Naive thymus-derived CD4-positive, alpha-beta T cell (primary cell): ENCODE measurements at regions of chr11 and their contacts with region 1.

Region 1: GRCh38 chr11:17384002-17384511 is 4.4 kb downstream of the KCNJ11 start:
- DNase-seq: peak; percentile 53 to 79 (median 69)
- ATAC-seq: peak; percentile 67
- H3K4me3 ChIP-seq: no peak overlapping the region
- H3K4me3 Mint-ChIP-seq: no peak overlapping the region
- H3K27ac ChIP-seq: no peak overlapping the region
- H3K27ac Mint-ChIP-seq: no peak overlapping the region
- H3K4me1 ChIP-seq: no peaks in the 10 kb centered on the region
- H3K4me1 Mint-ChIP-seq: peaks cover 0 to 7% (median 0%) of the 10 kb centered on the region in 7 donors
- H3K27me3 ChIP-seq: no peaks in the 10 kb centered on the region
- H3K27me3 Mint-ChIP-seq: peaks cover 0 to 5% (median 0%) of the 10 kb centered on the region in 5 donors

Region 2: DNA sequence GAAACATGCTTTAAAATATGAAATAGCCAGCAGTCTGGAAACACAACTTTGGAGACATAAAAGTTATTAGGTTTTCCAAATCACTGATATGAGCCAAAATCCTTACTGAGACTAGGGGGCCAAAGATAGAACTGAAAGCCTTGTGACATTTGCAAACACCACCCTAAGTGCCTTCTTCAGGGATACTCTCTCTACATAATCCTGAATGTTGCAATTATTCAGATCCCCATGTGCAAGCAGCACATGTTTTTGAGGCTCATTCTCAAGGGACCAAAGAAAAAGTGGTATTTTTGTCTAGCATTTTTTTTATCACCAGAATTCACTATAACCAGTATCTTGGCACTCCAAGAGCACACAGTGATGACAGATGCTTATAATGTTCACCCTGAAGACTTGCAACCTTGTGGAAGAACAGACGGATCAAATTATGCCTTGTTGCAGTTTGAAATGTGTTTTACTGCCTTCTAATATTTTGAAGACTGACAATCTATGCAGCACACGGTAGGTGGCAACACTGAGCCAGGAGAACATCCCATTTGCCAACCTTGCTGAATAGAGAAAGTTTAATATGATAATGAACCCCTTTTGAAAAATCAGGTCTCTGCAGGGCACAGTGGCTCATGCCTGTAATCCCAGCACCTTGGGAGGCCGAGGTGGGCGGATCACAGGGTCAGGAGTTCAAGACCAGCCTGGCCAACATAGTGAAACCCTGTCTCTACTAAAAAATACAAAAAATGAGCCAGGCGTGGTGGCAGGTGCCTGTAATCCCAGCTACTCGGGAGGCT is 448.3 kb before region 1 on chr11:
- CTCF ChIA-PET with region 1: no interaction called
- POLR2A ChIA-PET with region 1: no interaction called
- intact Hi-C with region 1: loop called in 1 of 2 experiments (anchors 10 kb)
- DNase-seq: peak in 2 of 9 donors; percentile 3 to 6
- ATAC-seq: no peak
- H3K4me3 ChIP-seq: no peak overlapping the region
- H3K4me3 Mint-ChIP-seq: no peak overlapping the region
- H3K27ac ChIP-seq: no peak overlapping the region
- H3K27ac Mint-ChIP-seq: no peak overlapping the region
- H3K4me1 ChIP-seq: no peaks in the 10 kb centered on the region
- H3K4me1 Mint-ChIP-seq: no peaks in the 10 kb centered on the region
- H3K27me3 ChIP-seq: no peaks in the 10 kb centered on the region
- H3K27me3 Mint-ChIP-seq: peaks cover 0 to 20% (median 5%) of the 10 kb centered on the region in 5 donors

Region 3: GRCh38 chr11:17343907-17344306 is 40.1 kb before region 1 on chr11:
- CTCF ChIA-PET with region 1: no interaction called
- POLR2A ChIA-PET with region 1: no interaction called
- intact Hi-C with region 1: no loop called
- DNase-seq: no peak
- ATAC-seq: no peak
- H3K4me3 ChIP-seq: no peak overlapping the region
- H3K4me3 Mint-ChIP-seq: no peak overlapping the region
- H3K27ac ChIP-seq: no peak overlapping the region
- H3K27ac Mint-ChIP-seq: no peak overlapping the region
- H3K4me1 ChIP-seq: no peaks in the 10 kb centered on the region
- H3K4me1 Mint-ChIP-seq: peaks cover 0 to 4% (median 0%) of the 10 kb centered on the region in 7 donors
- H3K27me3 ChIP-seq: no peaks in the 10 kb centered on the region
- H3K27me3 Mint-ChIP-seq: no peaks in the 10 kb centered on the region

Region 4: DNA sequence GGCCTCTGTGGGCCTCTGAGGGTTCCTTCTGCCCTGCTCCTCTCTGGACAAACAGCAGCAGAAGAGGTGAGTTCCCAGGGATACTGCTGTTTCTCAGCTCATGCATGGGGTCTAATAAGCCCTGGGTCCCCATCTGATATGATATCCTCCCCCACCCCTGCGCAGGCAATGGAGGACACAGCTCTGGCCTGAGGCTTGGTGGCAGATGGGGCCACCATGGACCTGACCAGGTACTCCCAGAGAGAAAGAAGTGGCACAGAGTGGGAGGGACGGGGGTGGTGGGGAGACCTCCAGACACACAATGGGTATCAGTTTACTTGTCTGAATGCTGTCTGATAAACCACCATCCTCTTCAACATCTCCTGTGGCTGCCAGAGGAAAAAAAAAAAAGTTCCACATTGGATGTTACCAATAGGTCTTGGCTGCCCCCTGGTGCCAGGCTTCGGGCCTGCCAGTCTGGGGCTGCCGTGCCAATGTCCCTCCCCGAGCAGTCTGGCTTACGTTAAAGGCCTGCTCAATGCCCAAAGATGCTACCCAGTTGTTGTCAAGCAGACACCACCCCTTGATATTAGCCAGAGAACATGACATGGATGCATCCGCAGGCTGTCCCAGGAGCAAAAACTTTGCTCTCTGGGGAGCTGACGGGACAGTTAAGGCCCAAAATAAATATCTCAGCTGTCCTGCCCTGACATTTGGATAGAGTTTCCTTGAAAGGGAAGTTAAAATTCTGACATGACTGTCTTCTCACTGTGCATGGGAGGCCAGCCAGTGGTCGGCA is 120.5 kb after region 1 on chr11:
- CTCF ChIA-PET with region 1: interaction called, 39 read pairs
- POLR2A ChIA-PET with region 1: no interaction called
- intact Hi-C with region 1: loop called (anchors 1 kb)
- DNase-seq: peak; percentile 63 to 83 (median 77)
- ATAC-seq: peak; percentile 79
- H3K4me3 ChIP-seq: no peak overlapping the region
- H3K4me3 Mint-ChIP-seq: no peak overlapping the region
- H3K27ac ChIP-seq: no peak overlapping the region
- H3K27ac Mint-ChIP-seq: no peak overlapping the region
- H3K4me1 ChIP-seq: no peaks in the 10 kb centered on the region
- H3K4me1 Mint-ChIP-seq: no peaks in the 10 kb centered on the region
- H3K27me3 ChIP-seq: no peaks in the 10 kb centered on the region
- H3K27me3 Mint-ChIP-seq: peaks cover 0 to 12% (median 5%) of the 10 kb centered on the region in 5 donors

Region 5: DNA sequence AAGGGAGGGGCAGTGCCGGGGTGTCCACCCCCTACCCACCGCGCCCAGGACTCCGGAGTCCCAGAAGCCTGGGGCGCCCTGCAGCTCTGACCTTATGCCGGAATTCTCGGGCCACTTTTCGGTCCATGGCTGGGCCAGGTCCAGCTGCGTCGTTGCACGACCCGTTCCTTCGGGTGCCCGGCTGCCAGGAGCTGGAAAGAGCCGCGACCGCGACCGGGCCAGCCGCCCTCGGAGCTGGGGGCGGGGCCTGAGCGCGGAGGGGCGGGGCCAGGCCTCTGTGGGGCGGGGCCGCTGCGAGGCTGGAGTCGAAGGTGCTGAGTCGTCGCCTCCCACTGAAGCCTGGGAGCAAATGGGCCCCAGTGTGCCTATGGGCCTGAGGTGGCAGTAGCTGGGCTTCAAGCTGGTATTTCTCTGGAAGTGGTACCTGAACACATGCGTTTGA is 160.1 kb after region 1 on chr11 and contains the start of gene USH1C:
- CTCF ChIA-PET with region 1: interaction called, 3 read pairs
- POLR2A ChIA-PET with region 1: no interaction called
- intact Hi-C with region 1: loop called in 1 of 2 experiments (anchors 1 kb)
- DNase-seq: peak in 1 of 9 donors; percentile 60
- ATAC-seq: no peak
- H3K4me3 ChIP-seq: no peak within 1 kb of the TSS
- H3K4me3 Mint-ChIP-seq: peak within 1 kb of the TSS in 7 of 10 donors; percentile 12 to 59 (median 45)
- H3K27ac ChIP-seq: no peak within 1 kb of the TSS
- H3K27ac Mint-ChIP-seq: no peak within 1 kb of the TSS
- H3K4me1 ChIP-seq: no peaks in the 10 kb centered on the region
- H3K4me1 Mint-ChIP-seq: peaks cover 0 to 15% (median 2%) of the 10 kb centered on the region in 7 donors
- H3K27me3 ChIP-seq: no peaks in the 10 kb centered on the region
- H3K27me3 Mint-ChIP-seq: peaks cover 34 to 55% (median 42%) of the 10 kb centered on the region in 5 donors
- total RNA-seq, gene USH1C: not detected

Region 6: DNA sequence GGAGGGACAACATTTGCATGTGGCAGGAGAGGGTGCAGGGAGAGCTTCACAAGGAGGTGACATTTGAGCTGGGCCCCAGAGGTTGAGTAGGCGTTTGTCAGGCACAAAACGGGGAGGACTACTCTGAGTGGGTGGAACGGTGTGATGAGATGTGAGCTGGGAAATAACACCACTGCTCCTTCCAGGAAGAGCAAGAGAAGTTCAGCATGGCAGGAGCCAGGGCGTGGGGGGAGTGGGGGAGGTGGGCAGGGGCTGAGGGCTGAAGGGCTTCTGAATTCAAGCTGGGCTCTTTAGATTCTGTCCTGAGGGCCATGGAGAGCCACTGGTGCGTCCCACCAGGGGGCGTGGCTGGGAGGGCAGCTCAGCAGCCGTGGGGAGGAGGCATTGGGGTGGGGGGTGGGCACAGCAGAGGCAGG is 217.2 kb after region 1 on chr11:
- CTCF ChIA-PET with region 1: no interaction called
- POLR2A ChIA-PET with region 1: no interaction called
- intact Hi-C with region 1: no loop called
- DNase-seq: no peak
- ATAC-seq: no peak
- H3K4me3 ChIP-seq: no peak overlapping the region
- H3K4me3 Mint-ChIP-seq: peak overlapping the region in 1 of 10 donors; percentile 5
- H3K27ac ChIP-seq: no peak overlapping the region
- H3K27ac Mint-ChIP-seq: no peak overlapping the region
- H3K4me1 ChIP-seq: no peaks in the 10 kb centered on the region
- H3K4me1 Mint-ChIP-seq: peaks cover 0 to 6% (median 0%) of the 10 kb centered on the region in 7 donors
- H3K27me3 ChIP-seq: no peaks in the 10 kb centered on the region
- H3K27me3 Mint-ChIP-seq: peaks cover 0 to 12% (median 0%) of the 10 kb centered on the region in 5 donors

Region 7: GRCh38 chr11:17760102-17761029 is 376.3 kb after region 1 on chr11:
- CTCF ChIA-PET with region 1: no interaction called
- POLR2A ChIA-PET with region 1: no interaction called
- intact Hi-C with region 1: no loop called
- DNase-seq: no peak
- ATAC-seq: no peak
- H3K4me3 ChIP-seq: no peak overlapping the region
- H3K4me3 Mint-ChIP-seq: no peak overlapping the region
- H3K27ac ChIP-seq: no peak overlapping the region
- H3K27ac Mint-ChIP-seq: no peak overlapping the region
- H3K4me1 ChIP-seq: no peaks in the 10 kb centered on the region
- H3K4me1 Mint-ChIP-seq: no peaks in the 10 kb centered on the region
- H3K27me3 ChIP-seq: no peaks in the 10 kb centered on the region
- H3K27me3 Mint-ChIP-seq: peaks cover 0 to 6% (median 4%) of the 10 kb centered on the region in 5 donors

Region 8: DNA sequence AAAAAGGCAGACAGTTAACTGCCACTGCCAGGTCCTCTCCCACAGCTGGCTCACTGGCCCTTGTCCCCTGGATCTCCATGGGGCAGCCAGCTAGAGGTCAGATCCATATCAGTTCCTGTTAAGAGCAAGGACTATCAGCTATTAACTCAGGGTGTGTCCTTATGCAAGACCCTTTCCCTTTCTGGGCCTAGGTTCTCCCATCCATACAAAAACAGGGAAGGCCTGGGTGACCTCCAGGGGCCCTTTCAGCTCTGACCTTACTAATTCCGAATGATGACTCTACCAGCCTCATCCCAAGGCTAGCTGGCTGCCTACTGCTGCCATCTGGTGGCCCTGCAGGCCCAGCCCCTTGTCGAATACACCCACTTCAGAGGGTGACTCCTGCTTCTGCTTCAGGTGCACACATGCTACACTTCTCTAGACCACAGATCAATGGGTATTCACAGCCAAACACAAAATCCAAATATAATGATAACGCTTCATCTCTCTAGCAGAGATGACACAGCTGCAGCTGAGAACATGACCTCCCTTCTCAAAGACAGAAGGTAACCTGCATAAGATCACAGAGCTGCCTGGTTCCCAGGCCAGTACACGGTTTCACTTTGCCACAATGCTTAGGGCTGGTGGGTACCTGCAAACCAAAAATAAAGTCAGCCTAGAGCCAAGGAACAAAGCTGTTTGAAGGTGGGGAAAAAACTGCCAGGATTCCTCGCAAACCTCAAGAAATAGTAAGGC is 594.7 kb after region 1 on chr11:
- CTCF ChIA-PET with region 1: no interaction called
- POLR2A ChIA-PET with region 1: no interaction called
- intact Hi-C with region 1: loop called in 1 of 2 experiments (anchors 10 kb)
- DNase-seq: peak in 1 of 9 donors; percentile 27
- ATAC-seq: no peak
- H3K4me3 ChIP-seq: no peak overlapping the region
- H3K4me3 Mint-ChIP-seq: no peak overlapping the region
- H3K27ac ChIP-seq: no peak overlapping the region
- H3K27ac Mint-ChIP-seq: peak overlapping the region in 1 of 9 donors; percentile 19
- H3K4me1 ChIP-seq: no peaks in the 10 kb centered on the region
- H3K4me1 Mint-ChIP-seq: peaks cover 0 to 9% (median 5%) of the 10 kb centered on the region in 7 donors
- H3K27me3 ChIP-seq: no peaks in the 10 kb centered on the region
- H3K27me3 Mint-ChIP-seq: no peaks in the 10 kb centered on the region